Left colon (tissue), 2 donors: ENCODE measurements at regions of chr14 and their contacts with region 1.

Region 1: DNA sequence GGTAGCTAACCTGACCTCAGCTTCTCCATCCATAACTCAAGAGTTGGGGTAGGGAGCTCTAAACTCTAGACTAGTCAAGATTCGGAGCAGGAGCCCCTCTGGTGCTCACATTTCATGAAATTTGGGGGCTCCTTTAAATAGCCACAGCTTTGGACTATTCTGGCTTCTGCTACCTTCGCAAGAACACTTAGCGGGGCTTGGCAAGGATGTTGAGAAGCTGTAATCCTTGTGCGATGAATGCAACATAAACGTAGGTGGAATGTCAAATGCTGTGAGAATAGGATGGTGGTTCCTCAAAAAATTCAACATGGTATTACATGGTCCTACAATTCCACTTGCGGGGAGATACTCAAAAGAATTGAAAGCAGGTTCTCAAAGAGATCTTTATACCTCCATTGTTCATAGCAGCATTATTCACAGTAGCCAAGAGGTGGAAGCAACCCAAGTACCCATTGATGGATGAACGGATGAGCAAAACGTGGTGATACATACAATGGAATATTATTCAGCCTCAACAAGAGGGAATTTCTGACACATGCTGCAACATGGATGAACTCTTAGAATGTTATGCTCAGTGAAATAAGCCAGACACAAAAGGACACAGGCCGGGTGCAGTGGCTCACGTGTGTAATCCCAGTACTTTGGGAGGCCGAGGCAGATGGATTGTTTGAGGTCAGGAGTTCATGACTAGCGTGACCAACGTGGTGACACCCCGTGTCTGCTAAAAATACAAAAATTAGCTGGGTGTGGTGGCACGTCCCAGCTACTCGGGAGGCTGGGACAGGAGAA is 73.8 kb downstream of the ACTN1 start:
- DNase-seq: no peak
- ATAC-seq: no peak

Region 2: GRCh38 chr14:68084256-68084655 is 821.0 kb before region 1 on chr14:
- intact Hi-C with region 1: no loop called
- DNase-seq: no peak
- ATAC-seq: peak; percentile 51

Region 3: DNA sequence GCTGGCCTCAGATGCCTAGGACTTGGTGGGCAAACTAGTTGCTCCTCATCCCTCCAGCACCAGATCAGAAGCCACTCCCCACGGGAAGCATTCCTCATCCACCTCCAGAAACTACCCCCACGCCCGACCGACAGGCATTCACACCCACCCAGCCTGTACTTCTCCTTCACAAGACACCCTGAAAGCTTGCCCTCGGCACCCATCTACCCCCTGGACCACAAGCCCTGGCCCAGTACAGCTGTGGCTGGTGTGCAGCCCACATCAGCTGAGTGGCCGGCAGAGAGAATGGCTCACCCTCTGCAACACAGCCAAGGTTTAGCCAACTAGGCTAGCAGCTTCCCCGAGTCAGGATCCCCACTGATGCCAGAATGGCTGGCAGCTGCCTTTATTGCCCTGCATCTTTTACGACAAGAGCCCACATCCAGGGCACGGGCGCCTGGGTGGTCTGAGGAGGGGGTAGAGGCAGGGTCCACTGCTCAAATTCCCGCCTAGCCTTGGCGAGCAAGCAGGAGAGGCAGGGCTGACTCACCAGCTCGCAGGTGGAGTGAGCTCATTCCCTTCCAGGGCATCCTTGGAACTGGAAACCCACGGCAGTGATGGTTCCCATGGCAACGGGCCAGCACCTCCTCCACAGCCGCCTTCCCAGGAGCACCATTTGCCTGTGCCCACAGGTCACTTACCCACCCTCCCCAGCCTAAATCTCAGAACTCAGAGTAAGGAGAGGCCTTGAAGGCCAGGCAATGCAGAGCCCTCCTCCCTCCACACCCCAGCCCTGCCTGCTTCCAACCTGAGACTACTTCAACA is 56.7 kb after region 1 on chr14:
- intact Hi-C with region 1: no loop called
- DNase-seq: peak in 1 of 2 donors; percentile 36
- ATAC-seq: no peak

Region 4: GRCh38 chr14:69055999-69056788 is 150.9 kb after region 1 on chr14:
- intact Hi-C with region 1: no loop called
- DNase-seq: no peak
- ATAC-seq: peak; percentile 55

Region 5: GRCh38 chr14:69090187-69090789 is 185.0 kb after region 1 on chr14:
- intact Hi-C with region 1: loop called in 1 of 2 experiments (anchors 10 kb)
- DNase-seq: peak in 1 of 2 donors; percentile 32
- ATAC-seq: peak; percentile 85